Psoas muscle (tissue), 8 donors: ENCODE measurements at regions of chr19 and their contacts with region 1.

Region 1: GRCh38 chr19:7104747-7105447 is 35.4 kb downstream of the ZNF557 start:
- DNase-seq: no peak
- ATAC-seq: no peak
- H3K4me3 ChIP-seq: no peak overlapping the region
- H3K27ac ChIP-seq: no peak overlapping the region
- H3K4me1 ChIP-seq: peaks cover under 1% of the 10 kb centered on the region
- H3K27me3 ChIP-seq: peaks cover 0 to 7% (median 0%) of the 10 kb centered on the region in 3 donors
- CTCF ChIP-seq: no peak

Region 2: GRCh38 chr19:7067716-7068115 is 37.2 kb before region 1 on chr19:
- intact Hi-C with region 1: no loop called
- DNase-seq: no peak
- ATAC-seq: no peak
- H3K4me3 ChIP-seq: no peak overlapping the region
- H3K27ac ChIP-seq: no peak overlapping the region
- H3K4me1 ChIP-seq: peaks cover 7% of the 10 kb centered on the region
- H3K27me3 ChIP-seq: peaks cover 0 to 1% (median 0%) of the 10 kb centered on the region in 3 donors
- CTCF ChIP-seq: no peak

Region 3: GRCh38 chr19:7152568-7152967 is 47.7 kb after region 1 on chr19:
- intact Hi-C with region 1: loop called in 1 of 2 experiments (anchors 2 kb)
- DNase-seq: no peak
- ATAC-seq: peak in 2 of 4 donors; percentile 12
- H3K4me3 ChIP-seq: no peak overlapping the region
- H3K27ac ChIP-seq: peak overlapping the region; percentile 46
- H3K4me1 ChIP-seq: no peaks in the 10 kb centered on the region
- H3K27me3 ChIP-seq: no peaks in the 10 kb centered on the region
- CTCF ChIP-seq: no peak

Region 4: GRCh38 chr19:7293795-7294570 is 189.1 kb after region 1 on chr19 and contains the start of gene INSR:
- intact Hi-C with region 1: loop called in 1 of 2 experiments (anchors 5 kb)
- DNase-seq: peak; percentile 92 to 95
- ATAC-seq: peak; percentile 92 to 96 (median 93)
- H3K4me3 ChIP-seq: peak within 1 kb of the TSS; percentile 98
- H3K27ac ChIP-seq: peak within 1 kb of the TSS; percentile 98
- H3K4me1 ChIP-seq: peaks cover 17% of the 10 kb centered on the region
- H3K27me3 ChIP-seq: no peaks in the 10 kb centered on the region
- CTCF ChIP-seq: no peak
- total RNA-seq, gene INSR: 48.5 to 95.1 (median 66.3) TPM

Region 5: DNA sequence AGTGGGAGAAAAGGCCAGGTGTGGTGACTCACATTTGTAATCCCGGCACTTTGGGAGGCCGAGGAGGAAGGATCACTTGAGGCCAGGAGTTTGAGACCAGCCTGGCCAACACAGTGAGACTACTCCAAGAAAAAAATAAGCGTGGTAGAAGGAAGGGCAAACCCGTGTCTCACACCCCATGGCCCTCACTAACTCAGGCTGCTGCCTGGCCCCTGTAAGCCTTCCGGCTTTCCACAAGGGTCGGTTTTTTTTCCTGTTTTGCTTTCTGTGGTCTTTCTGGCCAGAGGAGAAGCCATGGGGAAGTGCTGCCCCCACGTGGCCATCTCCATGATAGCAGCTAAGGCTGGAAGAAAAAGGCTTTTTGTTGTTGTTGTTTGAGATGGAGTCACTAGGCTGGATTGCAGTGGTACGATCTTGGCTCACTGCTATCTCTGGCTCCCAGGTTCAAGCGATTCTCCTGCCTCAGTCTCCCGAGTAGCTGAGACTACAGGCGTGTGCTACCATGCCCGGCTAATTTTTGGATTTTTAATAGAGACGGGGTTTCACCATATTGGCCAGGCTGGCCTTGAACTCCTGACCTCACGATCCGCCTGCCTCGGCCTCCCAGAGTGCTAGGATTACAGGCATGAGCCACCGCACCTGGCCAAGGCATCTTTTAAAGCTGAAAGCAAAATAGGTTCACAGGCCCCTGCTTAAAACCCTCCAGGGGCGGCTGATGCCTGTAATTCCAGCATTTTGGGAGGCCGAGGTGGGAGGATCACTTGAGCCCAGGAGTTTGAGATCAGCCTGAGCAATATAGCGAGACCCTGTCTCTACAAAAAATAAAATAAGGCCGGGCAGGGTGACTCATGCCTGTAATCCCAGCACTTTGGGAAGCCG is 236.3 kb after region 1 on chr19:
- intact Hi-C with region 1: loop called (anchors 1 to 2 kb)
- DNase-seq: peak; percentile 80 to 86
- ATAC-seq: peak; percentile 51 to 83 (median 60)
- H3K4me3 ChIP-seq: no peak overlapping the region
- H3K27ac ChIP-seq: no peak overlapping the region
- H3K4me1 ChIP-seq: no peaks in the 10 kb centered on the region
- H3K27me3 ChIP-seq: peaks cover 0 to 4% (median 1%) of the 10 kb centered on the region in 3 donors
- CTCF ChIP-seq: peak; percentile 94

Region 6: GRCh38 chr19:7382694-7383093 is 277.8 kb after region 1 on chr19:
- intact Hi-C with region 1: loop called in 1 of 2 experiments (anchors 5 kb)
- DNase-seq: no peak
- ATAC-seq: no peak
- H3K4me3 ChIP-seq: no peak overlapping the region
- H3K27ac ChIP-seq: no peak overlapping the region
- H3K4me1 ChIP-seq: no peaks in the 10 kb centered on the region
- H3K27me3 ChIP-seq: no peaks in the 10 kb centered on the region
- CTCF ChIP-seq: no peak

Region 7: GRCh38 chr19:7460562-7460966 is 355.7 kb after region 1 on chr19:
- intact Hi-C with region 1: no loop called
- DNase-seq: no peak
- ATAC-seq: no peak
- H3K4me3 ChIP-seq: no peak overlapping the region
- H3K27ac ChIP-seq: no peak overlapping the region
- H3K4me1 ChIP-seq: no peaks in the 10 kb centered on the region
- H3K27me3 ChIP-seq: no peaks in the 10 kb centered on the region
- CTCF ChIP-seq: no peak

Region 8: GRCh38 chr19:7618771-7619514 is 514.0 kb after region 1 on chr19:
- intact Hi-C with region 1: loop called in 1 of 2 experiments (anchors 5 kb)
- DNase-seq: no peak
- ATAC-seq: peak in 3 of 4 donors; percentile 21 to 54 (median 28)
- H3K4me3 ChIP-seq: no peak overlapping the region
- H3K27ac ChIP-seq: no peak overlapping the region
- H3K4me1 ChIP-seq: peaks cover 8% of the 10 kb centered on the region
- H3K27me3 ChIP-seq: no peaks in the 10 kb centered on the region
- CTCF ChIP-seq: no peak

Region 9: GRCh38 chr19:7799640-7800355 is 694.9 kb after region 1 on chr19:
- intact Hi-C with region 1: loop called in 1 of 2 experiments (anchors 10 kb)
- DNase-seq: peak in 1 of 2 donors; percentile 41
- ATAC-seq: peak in 3 of 4 donors; percentile 70 to 85 (median 82)
- H3K4me3 ChIP-seq: peak overlapping the region; percentile 28
- H3K27ac ChIP-seq: no peak overlapping the region
- H3K4me1 ChIP-seq: peaks cover 11% of the 10 kb centered on the region
- H3K27me3 ChIP-seq: peaks cover under 1 to 36% (median 5%) of the 10 kb centered on the region in 3 donors
- CTCF ChIP-seq: peak; percentile 67